Aorta (tissue), 5 donors: ENCODE measurements at regions of chr2 and their contacts with region 1.

Region 1: DNA sequence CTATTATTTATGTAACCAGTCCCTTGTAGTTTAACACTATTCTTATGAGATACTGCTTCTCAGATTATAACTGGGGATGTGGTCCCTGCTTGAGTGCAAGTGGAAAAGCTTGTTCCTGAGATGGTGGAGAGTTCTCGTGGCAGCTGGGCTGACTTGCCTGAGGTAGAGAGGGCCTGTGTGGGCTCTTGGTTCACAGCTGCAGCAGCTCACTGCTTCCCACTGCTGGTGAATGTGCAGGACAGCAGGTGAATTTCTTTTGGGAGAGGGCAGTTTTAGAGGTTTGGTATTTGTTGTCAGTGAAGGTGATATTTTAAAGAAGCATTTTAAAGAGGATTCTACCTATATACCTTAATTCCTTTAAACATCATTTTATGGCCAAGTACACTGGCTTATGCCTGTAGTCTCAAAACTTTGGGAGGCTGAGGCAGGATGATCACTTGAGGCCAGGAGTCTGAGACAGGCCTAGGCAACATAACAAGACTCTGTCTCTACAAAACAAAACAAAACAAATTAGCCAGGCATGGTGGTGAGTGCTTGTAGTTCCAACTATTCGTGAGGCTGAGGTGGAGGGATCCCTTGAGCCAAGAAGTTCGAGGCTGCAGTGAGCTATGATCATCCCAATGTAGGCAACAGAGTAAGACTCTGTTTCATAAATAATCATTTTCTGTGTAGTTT is 94.8 kb downstream of the MTA3 start:
- DNase-seq: peak; percentile 65 to 79
- ATAC-seq: peak; percentile 85
- H3K4me3 ChIP-seq: no peak overlapping the region
- H3K27ac ChIP-seq: no peak overlapping the region
- H3K4me1 ChIP-seq: no peaks in the 10 kb centered on the region
- H3K27me3 ChIP-seq: no peaks in the 10 kb centered on the region

Region 2: DNA sequence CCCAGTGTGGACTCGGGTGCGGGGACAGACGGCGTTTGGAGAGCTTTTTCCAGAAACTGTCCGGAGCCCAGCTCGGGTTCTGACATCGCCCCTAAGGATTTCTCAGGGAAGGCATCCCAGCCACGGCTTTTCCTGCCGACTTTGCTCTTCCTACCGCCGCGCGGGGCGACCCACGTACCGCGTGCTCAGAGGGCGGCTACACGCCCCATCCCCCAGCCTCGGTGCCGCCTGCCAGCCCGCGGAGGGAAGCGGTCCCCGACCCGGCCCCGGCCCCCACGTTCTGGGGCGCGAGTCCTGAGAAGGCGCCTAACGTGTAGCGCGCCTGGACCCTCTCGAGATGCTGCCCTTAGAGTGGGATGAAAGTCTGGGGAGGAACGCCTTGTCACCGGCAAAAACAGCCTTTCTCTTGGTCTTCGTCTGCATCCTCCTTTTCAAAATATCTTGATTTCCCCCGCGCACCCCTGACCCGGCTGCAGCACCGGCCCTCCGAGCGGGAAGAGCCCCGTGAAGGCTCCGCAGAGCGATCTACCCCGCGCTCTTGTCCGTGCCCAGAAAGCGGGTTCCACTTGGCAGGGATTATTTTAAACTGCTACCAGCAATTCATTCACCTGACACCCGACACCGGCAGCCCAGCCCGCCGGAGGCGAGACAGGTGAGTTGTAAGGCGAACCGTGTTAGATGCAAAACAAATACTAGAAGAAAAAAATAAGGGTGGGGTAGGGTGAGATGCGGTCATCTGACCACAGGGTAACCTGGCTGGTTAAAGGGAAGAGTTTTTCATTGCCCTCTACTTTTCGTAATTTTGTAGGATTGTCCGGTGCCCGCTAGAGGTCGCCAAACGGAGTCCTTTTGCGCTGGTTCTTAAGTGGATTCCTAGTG is 168.6 kb before region 1 on chr2:
- intact Hi-C with region 1: loop called (anchors 5 kb)
- DNase-seq: peak; percentile 72 to 87
- ATAC-seq: peak; percentile 66
- H3K4me3 ChIP-seq: peak overlapping the region; percentile 13 to 33
- H3K27ac ChIP-seq: no peak overlapping the region
- H3K4me1 ChIP-seq: no peaks in the 10 kb centered on the region
- H3K27me3 ChIP-seq: no peaks in the 10 kb centered on the region

Region 3: DNA sequence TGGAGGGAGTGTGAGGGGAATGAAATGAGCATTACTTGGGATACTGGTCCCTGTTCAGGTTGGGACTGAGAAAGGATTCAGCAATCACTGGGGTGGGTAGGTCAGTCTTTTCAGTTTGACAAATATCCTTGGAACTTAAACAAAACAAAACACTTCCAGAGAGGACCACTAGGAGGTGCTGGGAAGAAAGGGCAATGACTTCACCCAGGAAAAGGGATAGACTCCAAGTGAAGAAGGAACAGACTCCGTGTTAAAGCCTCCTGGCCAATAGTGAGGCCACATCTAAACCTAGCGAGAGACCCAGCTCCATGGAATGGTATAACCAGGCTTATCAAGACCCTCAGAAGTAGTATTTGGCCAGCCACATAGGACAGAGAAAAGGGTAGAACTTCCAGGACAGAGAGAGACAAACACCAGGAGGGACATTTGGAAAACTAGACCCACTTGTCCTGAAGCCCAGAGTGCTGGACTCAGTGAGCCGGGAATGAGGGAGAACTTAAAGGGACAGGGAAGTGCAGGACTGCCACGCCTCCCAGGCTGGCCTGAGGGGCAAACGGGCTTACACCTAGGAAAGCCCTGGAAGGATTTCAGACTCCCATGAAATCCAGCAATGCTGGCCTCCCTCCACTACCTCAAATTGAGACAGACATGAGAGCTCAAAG is 149.9 kb before region 1 on chr2:
- intact Hi-C with region 1: loop called (anchors 1 to 5 kb)
- DNase-seq: no peak
- ATAC-seq: peak; percentile 63
- H3K4me3 ChIP-seq: no peak overlapping the region
- H3K27ac ChIP-seq: no peak overlapping the region
- H3K4me1 ChIP-seq: no peaks in the 10 kb centered on the region
- H3K27me3 ChIP-seq: no peaks in the 10 kb centered on the region

Region 4: DNA sequence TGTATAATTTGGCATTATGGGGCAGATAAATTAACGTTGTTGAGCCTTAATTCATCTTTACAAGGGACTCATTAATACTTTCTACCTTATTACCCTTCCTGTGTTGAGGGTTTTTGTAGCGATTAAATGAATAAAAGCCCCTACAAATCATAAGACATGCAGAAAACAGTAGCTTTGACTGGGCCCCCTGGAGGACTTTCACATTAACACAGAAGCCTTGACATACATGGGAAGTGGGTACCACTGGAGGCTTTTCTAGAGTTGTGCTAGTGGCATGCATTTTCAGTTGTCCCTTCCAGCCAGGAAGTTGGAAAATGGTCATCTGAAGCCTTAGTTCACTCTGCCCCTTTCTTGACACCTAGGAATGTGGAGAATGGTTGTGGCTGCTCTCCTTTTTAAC is 64.6 kb before region 1 on chr2:
- intact Hi-C with region 1: no loop called
- DNase-seq: no peak
- ATAC-seq: no peak
- H3K4me3 ChIP-seq: no peak overlapping the region
- H3K27ac ChIP-seq: no peak overlapping the region
- H3K4me1 ChIP-seq: no peaks in the 10 kb centered on the region
- H3K27me3 ChIP-seq: no peaks in the 10 kb centered on the region